H1 (cell line): ENCODE measurements at regions of chr14 and their contacts with region 1.

Region 1: DNA sequence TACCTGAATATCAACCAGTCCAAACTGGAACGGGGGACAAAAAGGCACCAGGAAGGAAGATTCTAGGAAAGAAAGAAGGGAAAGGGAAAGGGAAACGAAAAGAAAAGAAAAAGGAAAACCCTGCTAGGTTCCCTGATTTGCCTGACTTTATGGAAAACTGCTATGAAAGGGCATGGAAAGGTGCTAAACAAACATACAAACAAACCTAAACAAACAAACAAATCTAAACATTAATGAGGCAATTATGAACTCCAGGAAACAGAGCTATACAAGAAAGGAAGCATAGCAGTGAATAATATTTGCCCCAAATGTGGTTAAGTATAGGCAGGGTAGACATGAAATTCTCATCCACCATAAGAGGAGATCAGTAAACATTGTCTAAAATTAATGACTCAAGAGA is 11.9 kb upstream of the VCPKMT start:
- DNase-seq: no peak
- H3K4me3 ChIP-seq: no peak overlapping the region
- H3K27ac ChIP-seq: no peak overlapping the region
- H3K4me1 ChIP-seq: no peaks in the 10 kb centered on the region
- H3K27me3 ChIP-seq: no peaks in the 10 kb centered on the region
- CTCF ChIP-seq: no peak
- EP300 ChIP-seq: no peak
- POLR2A ChIP-seq: no peak
- RAD21 ChIP-seq: no peak

Region 2: GRCh38 chr14:50099335-50099734 is 28.9 kb before region 1 on chr14:
- CTCF ChIA-PET with region 1: no interaction called
- POLR2A ChIA-PET with region 1: no interaction called
- DNase-seq: no peak
- H3K4me3 ChIP-seq: no peak overlapping the region
- H3K27ac ChIP-seq: no peak overlapping the region
- H3K4me1 ChIP-seq: no peaks in the 10 kb centered on the region
- H3K27me3 ChIP-seq: no peaks in the 10 kb centered on the region
- CTCF ChIP-seq: no peak
- EP300 ChIP-seq: no peak
- POLR2A ChIP-seq: no peak
- RAD21 ChIP-seq: no peak

Region 3: GRCh38 chr14:50116181-50116956 is 11.9 kb before region 1 on chr14 and contains the start of gene VCPKMT:
- CTCF ChIA-PET with region 1: no interaction called
- POLR2A ChIA-PET with region 1: interaction called, 13 read pairs
- DNase-seq: peak; percentile 66 to 95
- H3K4me3 ChIP-seq: peak within 1 kb of the TSS; percentile 93 to 97 (median 96)
- H3K27ac ChIP-seq: peak within 1 kb of the TSS; percentile 88
- H3K4me1 ChIP-seq: peaks cover 0 to 6% (median 3%) of the 10 kb centered on the region in 4 experiments; a peak in 3 of 7 replicates
- H3K27me3 ChIP-seq: no peaks in the 10 kb centered on the region
- CTCF ChIP-seq: no peak
- EP300 ChIP-seq: no peak
- POLR2A ChIP-seq: peak; percentile 97 to 98
- RAD21 ChIP-seq: no peak
- total RNA-seq, gene VCPKMT: 7.1 and 8.9 TPM in 2 replicates